Spleen (tissue), 13 donors: ENCODE measurements at regions of chr16 and their contacts with region 1.

Region 1: GRCh38 chr16:81469710-81470535 is 25.3 kb downstream of the CMIP start:
- DNase-seq: peak; percentile 92
- H3K4me3 ChIP-seq: peak overlapping the region in 7 of 8 donors; percentile 1 to 56 (median 13)
- H3K27ac ChIP-seq: peak overlapping the region; percentile 79 to 95 (median 88)
- H3K4me1 ChIP-seq: peaks cover 35 to 100% (median 99%) of the 10 kb centered on the region in 6 donors
- H3K27me3 ChIP-seq: no peaks in the 10 kb centered on the region
- CTCF ChIP-seq: peak in 2 of 11 experiments; percentile 14 to 25
- POLR2A ChIP-seq: no peak

Region 2: GRCh38 chr16:81513204-81514040 is 43.5 kb after region 1 on chr16:
- intact Hi-C with region 1: loop called (anchors 10 kb)
- DNase-seq: peak; percentile 82
- H3K4me3 ChIP-seq: peak overlapping the region in 1 of 8 donors; percentile 11
- H3K27ac ChIP-seq: peak overlapping the region in 7 of 8 donors; percentile 33 to 67 (median 61)
- H3K4me1 ChIP-seq: peaks cover 14 to 78% (median 47%) of the 10 kb centered on the region in 6 donors
- H3K27me3 ChIP-seq: no peaks in the 10 kb centered on the region
- CTCF ChIP-seq: no peak
- POLR2A ChIP-seq: no peak

Region 3: DNA sequence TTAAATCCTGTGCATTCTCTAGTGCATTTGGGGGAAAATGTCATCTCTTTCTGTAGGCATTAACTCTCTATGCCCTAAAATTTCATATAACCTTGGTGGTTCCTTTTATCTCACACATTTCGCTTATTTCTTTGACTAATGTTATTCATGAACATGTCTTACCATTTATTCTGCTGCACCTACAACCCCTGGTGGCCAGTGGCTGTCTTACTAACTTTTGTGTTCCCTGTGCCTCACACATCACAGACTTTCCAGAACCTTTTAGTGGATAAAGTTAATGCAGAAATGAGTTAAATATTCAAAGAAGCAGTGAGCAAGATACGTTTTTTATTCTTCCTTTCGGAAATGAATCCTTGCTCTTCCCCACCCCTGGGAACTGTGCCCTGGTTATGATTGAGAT is 1268.8 kb after region 1 on chr16:
- intact Hi-C with region 1: no loop called
- DNase-seq: no peak
- H3K4me3 ChIP-seq: no peak overlapping the region
- H3K27ac ChIP-seq: no peak overlapping the region
- H3K4me1 ChIP-seq: no peaks in the 10 kb centered on the region
- H3K27me3 ChIP-seq: peaks cover 0 to 15% (median 0%) of the 10 kb centered on the region in 7 donors
- CTCF ChIP-seq: no peak
- POLR2A ChIP-seq: no peak